Naive thymus-derived CD4-positive, alpha-beta T cell (primary cell): ENCODE measurements at regions of chr11 and their contacts with region 1.

Region 1: DNA sequence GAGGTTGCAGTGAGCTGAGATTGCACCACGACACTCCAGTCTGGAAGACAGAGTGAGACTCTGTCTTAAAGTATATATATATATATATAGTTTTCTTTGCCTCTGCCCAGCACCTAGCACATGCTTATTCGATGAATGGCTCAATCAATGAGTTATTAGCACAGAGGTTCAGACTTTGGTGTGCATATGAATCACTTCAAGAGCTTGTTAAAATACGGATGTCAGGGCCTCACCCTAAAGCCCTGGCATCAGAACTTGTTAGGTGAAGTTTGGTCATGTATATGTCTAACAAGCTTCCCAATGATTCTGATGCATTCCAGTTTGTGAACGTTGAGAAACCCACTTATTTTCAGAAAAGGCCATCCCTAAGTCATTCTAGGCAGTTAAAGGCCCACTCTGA is 21.8 kb upstream of the TMEM86A start:
- DNase-seq: no peak
- ATAC-seq: no peak
- H3K4me3 ChIP-seq: no peak overlapping the region
- H3K4me3 Mint-ChIP-seq: no peak overlapping the region
- H3K27ac ChIP-seq: no peak overlapping the region
- H3K27ac Mint-ChIP-seq: no peak overlapping the region
- H3K4me1 ChIP-seq: peaks cover 5 to 17% of the 10 kb centered on the region in 2 donors
- H3K4me1 Mint-ChIP-seq: peaks cover 10 to 34% (median 26%) of the 10 kb centered on the region in 7 donors
- H3K27me3 ChIP-seq: no peaks in the 10 kb centered on the region
- H3K27me3 Mint-ChIP-seq: no peaks in the 10 kb centered on the region

Region 2: GRCh38 chr11:18731949-18732821 is 55.4 kb after region 1 on chr11:
- CTCF ChIA-PET with region 1: interaction called, 11 read pairs
- POLR2A ChIA-PET with region 1: no interaction called
- intact Hi-C with region 1: loop called in 1 of 2 experiments (anchors 2 kb)
- DNase-seq: peak; percentile 44 to 81 (median 65)
- ATAC-seq: peak; percentile 79
- H3K4me3 ChIP-seq: no peak overlapping the region
- H3K4me3 Mint-ChIP-seq: no peak overlapping the region
- H3K27ac ChIP-seq: no peak overlapping the region
- H3K27ac Mint-ChIP-seq: peak overlapping the region in 1 of 9 donors; percentile 32
- H3K4me1 ChIP-seq: peaks cover 5 to 6% of the 10 kb centered on the region in 2 donors
- H3K4me1 Mint-ChIP-seq: peaks cover 4 to 15% (median 13%) of the 10 kb centered on the region in 7 donors
- H3K27me3 ChIP-seq: no peaks in the 10 kb centered on the region
- H3K27me3 Mint-ChIP-seq: peaks cover 0 to 9% (median 0%) of the 10 kb centered on the region in 5 donors